ENCODE measurements at regions of chr20 and their contacts with region 1.

Region 1: DNA sequence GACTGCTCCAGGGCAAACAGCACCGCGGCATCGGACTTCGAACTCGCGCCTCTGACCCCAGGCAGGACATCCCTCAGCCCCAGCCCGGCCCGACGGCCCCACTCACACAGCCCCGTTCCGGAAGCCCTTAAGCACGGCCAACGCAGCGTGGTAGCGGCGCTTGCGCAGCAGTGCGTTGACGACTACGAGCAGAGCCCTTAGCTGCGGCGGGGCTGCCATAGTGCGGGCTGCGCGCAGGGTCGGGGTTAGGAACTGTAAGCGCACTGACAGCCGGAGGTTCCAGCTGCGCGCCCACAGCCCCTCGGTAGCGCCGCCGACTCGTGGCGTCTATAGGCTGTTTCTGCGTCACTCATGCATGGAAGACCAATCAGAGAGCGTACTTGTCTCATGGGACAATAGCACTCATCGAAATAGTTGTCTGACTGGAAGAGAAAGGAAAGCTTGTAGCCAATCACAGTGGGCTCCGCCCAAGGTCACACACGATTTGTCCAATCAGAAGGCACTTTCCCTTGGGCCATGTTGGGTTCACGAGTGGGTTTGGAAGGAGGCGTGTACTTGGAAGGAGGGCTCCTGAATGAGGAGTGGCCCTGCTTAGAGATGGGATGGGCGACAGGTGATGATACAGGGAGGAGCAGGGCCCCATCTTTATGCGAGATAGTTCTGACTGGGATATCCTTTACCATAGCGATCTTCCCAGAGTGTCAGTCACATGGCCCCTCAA is at the start of gene PXMP4:
- DNase-seq: peak; percentile 90 to 96 (median 94)
- H3K4me3 ChIP-seq: peak within 1 kb of the TSS; percentile 25 to 88
- H3K4me3 Mint-ChIP-seq: peak within 1 kb of the TSS; percentile 86 to 97 (median 90)
- H3K27ac ChIP-seq: peak within 1 kb of the TSS; percentile 67
- H3K27ac Mint-ChIP-seq: peak within 1 kb of the TSS; percentile 81 to 98 (median 92)
- H3K4me1 ChIP-seq: peaks cover 15% of the 10 kb centered on the region
- H3K4me1 Mint-ChIP-seq: peaks cover 18 to 40% (median 23%) of the 10 kb centered on the region in 4 donors
- H3K27me3 ChIP-seq: no peaks in the 10 kb centered on the region
- H3K27me3 Mint-ChIP-seq: no peaks in the 10 kb centered on the region
- total RNA-seq, gene PXMP4: 15.7 to 16.3 TPM

Region 2: GRCh38 chr20:33443512-33444239 is 276.5 kb before region 1 on chr20 and contains the start of gene SNTA1:
- CTCF ChIA-PET with region 1: no interaction called
- POLR2A ChIA-PET with region 1: interaction called, 14 read pairs
- intact Hi-C with region 1: no loop called
- DNase-seq: peak; percentile 80 to 88 (median 81)
- H3K4me3 ChIP-seq: peak within 1 kb of the TSS; percentile 42 to 85
- H3K4me3 Mint-ChIP-seq: peak within 1 kb of the TSS; percentile 92 to 97 (median 92)
- H3K27ac ChIP-seq: peak within 1 kb of the TSS; percentile 74
- H3K27ac Mint-ChIP-seq: peak within 1 kb of the TSS; percentile 90 to 97 (median 94)
- H3K4me1 ChIP-seq: peaks cover 17% of the 10 kb centered on the region
- H3K4me1 Mint-ChIP-seq: peaks cover 14 to 28% (median 22%) of the 10 kb centered on the region in 4 donors
- H3K27me3 ChIP-seq: no peaks in the 10 kb centered on the region
- H3K27me3 Mint-ChIP-seq: no peaks in the 10 kb centered on the region
- total RNA-seq, gene SNTA1: 5.1 to 5.7 TPM

Region 3: DNA sequence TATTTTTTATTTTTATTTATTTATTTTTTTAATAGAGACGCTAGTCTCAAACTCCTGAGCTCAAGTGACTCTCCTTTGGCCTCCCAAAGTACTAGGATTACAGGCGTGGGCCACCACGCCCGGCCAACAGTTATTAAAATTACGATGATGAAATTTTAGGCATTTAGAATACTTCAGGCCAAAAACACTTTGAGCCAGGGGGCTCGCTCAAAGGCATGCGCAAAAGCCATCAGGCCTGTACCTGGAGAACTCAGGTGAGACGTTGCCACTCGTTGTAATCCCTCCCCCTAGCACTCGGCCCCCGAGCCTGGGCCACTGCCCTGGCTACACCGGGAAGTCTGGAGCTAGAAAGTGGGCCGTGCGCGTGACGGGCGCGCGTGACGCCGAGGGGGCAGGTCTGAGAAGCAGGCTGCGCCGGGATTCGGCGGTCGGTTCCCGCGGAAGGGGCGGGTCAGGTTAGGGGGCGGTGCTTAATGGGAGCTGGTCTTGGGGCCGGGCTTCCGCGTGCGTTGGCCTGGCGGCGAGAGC is 230.6 kb before region 1 on chr20:
- CTCF ChIA-PET with region 1: interaction called, 4 read pairs
- POLR2A ChIA-PET with region 1: interaction called, 18 read pairs
- intact Hi-C with region 1: loop called (anchors 1 kb)
- DNase-seq: peak; percentile 98 to 99 (median 99)
- H3K4me3 ChIP-seq: peak overlapping the region; percentile 61 to 70
- H3K4me3 Mint-ChIP-seq: peak overlapping the region; percentile 81 to 96 (median 86)
- H3K27ac ChIP-seq: peak overlapping the region; percentile 89
- H3K27ac Mint-ChIP-seq: peak overlapping the region; percentile 92 to 95 (median 94)
- H3K4me1 ChIP-seq: peaks cover 16% of the 10 kb centered on the region
- H3K4me1 Mint-ChIP-seq: peaks cover 8 to 24% (median 18%) of the 10 kb centered on the region in 4 donors
- H3K27me3 ChIP-seq: no peaks in the 10 kb centered on the region
- H3K27me3 Mint-ChIP-seq: no peaks in the 10 kb centered on the region

Region 4: GRCh38 chr20:33679758-33680485 is 40.2 kb before region 1 on chr20:
- CTCF ChIA-PET with region 1: no interaction called
- POLR2A ChIA-PET with region 1: interaction called, 19 read pairs
- intact Hi-C with region 1: no loop called
- DNase-seq: peak; percentile 22 to 73 (median 36)
- H3K4me3 ChIP-seq: no peak overlapping the region
- H3K4me3 Mint-ChIP-seq: peak overlapping the region in 7 of 8 donors; percentile 3 to 79 (median 71)
- H3K27ac ChIP-seq: no peak overlapping the region
- H3K27ac Mint-ChIP-seq: peak overlapping the region; percentile 58 to 93 (median 90)
- H3K4me1 ChIP-seq: peaks cover 47% of the 10 kb centered on the region
- H3K4me1 Mint-ChIP-seq: peaks cover 24 to 61% (median 43%) of the 10 kb centered on the region in 4 donors
- H3K27me3 ChIP-seq: no peaks in the 10 kb centered on the region
- H3K27me3 Mint-ChIP-seq: no peaks in the 10 kb centered on the region

Region 5: GRCh38 chr20:33686100-33686983 is 33.8 kb before region 1 on chr20 and contains the start of gene E2F1:
- CTCF ChIA-PET with region 1: interaction called, 4 read pairs
- POLR2A ChIA-PET with region 1: interaction called, 13 read pairs
- intact Hi-C with region 1: loop called (anchors 1 kb)
- DNase-seq: peak; percentile 91 to 95 (median 93)
- H3K4me3 ChIP-seq: peak within 1 kb of the TSS in 1 of 2 donors; percentile 38
- H3K4me3 Mint-ChIP-seq: peak within 1 kb of the TSS; percentile 82 to 89 (median 86)
- H3K27ac ChIP-seq: peak within 1 kb of the TSS; percentile 54
- H3K27ac Mint-ChIP-seq: peak within 1 kb of the TSS; percentile 84 to 94 (median 91)
- H3K4me1 ChIP-seq: peaks cover 40% of the 10 kb centered on the region
- H3K4me1 Mint-ChIP-seq: peaks cover 26 to 62% (median 43%) of the 10 kb centered on the region in 4 donors
- H3K27me3 ChIP-seq: no peaks in the 10 kb centered on the region
- H3K27me3 Mint-ChIP-seq: no peaks in the 10 kb centered on the region
- total RNA-seq, gene E2F1: 2.2 to 2.6 TPM

Region 6: GRCh38 chr20:33773412-33774089 is 53.4 kb after region 1 on chr20:
- CTCF ChIA-PET with region 1: no interaction called
- POLR2A ChIA-PET with region 1: no interaction called
- intact Hi-C with region 1: no loop called
- DNase-seq: no peak
- H3K4me3 ChIP-seq: no peak overlapping the region
- H3K4me3 Mint-ChIP-seq: no peak overlapping the region
- H3K27ac ChIP-seq: no peak overlapping the region
- H3K27ac Mint-ChIP-seq: no peak overlapping the region
- H3K4me1 ChIP-seq: peaks cover 2% of the 10 kb centered on the region
- H3K4me1 Mint-ChIP-seq: peaks cover under 1 to 2% (median 2%) of the 10 kb centered on the region in 4 donors
- H3K27me3 ChIP-seq: no peaks in the 10 kb centered on the region
- H3K27me3 Mint-ChIP-seq: no peaks in the 10 kb centered on the region